ENCODE measurements at regions of chr6 and their contacts with region 1.

Region 1: DNA sequence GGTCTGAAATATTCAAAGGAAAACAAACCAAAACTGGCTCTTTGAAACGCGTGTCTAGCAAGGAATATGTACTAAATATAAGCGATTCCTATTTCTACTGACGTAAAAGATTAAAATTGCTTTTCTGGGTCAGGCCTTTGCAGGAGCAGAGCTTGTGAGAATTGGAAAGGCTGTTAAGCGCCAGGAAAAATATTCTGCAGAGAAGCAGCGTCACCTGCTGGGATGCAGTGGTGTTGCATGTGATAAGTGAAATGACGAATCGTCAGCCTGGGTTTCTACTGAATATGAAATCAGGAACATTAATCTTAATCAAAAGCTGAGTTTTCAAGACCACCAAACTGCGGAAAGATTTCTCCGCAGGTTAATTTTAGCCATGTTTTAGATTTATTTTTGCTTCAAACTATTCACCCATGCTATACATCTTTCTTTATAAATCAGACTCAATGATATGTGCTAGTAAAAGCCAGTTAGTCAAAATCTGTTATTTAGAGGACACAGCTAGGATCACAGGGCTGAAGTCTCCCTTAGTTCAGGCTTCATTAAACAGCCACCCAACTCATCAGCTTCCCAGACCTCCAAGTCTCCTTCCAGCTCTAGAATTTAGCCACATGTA is 67.4 kb downstream of the ALDH8A1 start:
- DNase-seq: peak; percentile 22 to 67
- ATAC-seq: peak; percentile 50 to 74; a peak in 4 of 6 replicates
- H3K4me3 ChIP-seq: no peak overlapping the region
- H3K27ac ChIP-seq: peak overlapping the region; percentile 55 to 67; a peak in 5 of 6 replicates
- H3K4me1 ChIP-seq: no peaks in the 10 kb centered on the region
- CTCF ChIP-seq: peak; percentile 86
- EP300 ChIP-seq: no peak
- POLR2A ChIP-seq: no peak
- RAD21 ChIP-seq: peak; percentile 93 to 96

Region 2: GRCh38 chr6:134123666-134124208 is 758.8 kb before region 1 on chr6:
- CTCF ChIA-PET with region 1: interaction called, 19 read pairs
- POLR2A ChIA-PET with region 1: no interaction called
- DNase-seq: peak; percentile 19 to 90
- ATAC-seq: peak; percentile 98 to 99
- H3K4me3 ChIP-seq: no peak overlapping the region
- H3K27ac ChIP-seq: peak overlapping the region; percentile 39 to 40; a peak in 3 of 6 replicates
- H3K4me1 ChIP-seq: no peaks in the 10 kb centered on the region
- CTCF ChIP-seq: peak; percentile 78
- EP300 ChIP-seq: no peak
- POLR2A ChIP-seq: no peak
- RAD21 ChIP-seq: peak; percentile 54 to 56

Region 3: GRCh38 chr6:134161036-134161435 is 721.5 kb before region 1 on chr6:
- CTCF ChIA-PET with region 1: interaction called, 31 read pairs
- POLR2A ChIA-PET with region 1: no interaction called
- DNase-seq: no peak
- ATAC-seq: no peak
- H3K4me3 ChIP-seq: no peak overlapping the region
- H3K27ac ChIP-seq: peak overlapping the region; percentile 21 to 37; a peak in 1 of 6 replicates
- H3K4me1 ChIP-seq: peaks cover 5% of the 10 kb centered on the region; the same call in 1 of the 3 replicates
- CTCF ChIP-seq: no peak
- EP300 ChIP-seq: no peak
- POLR2A ChIP-seq: no peak
- RAD21 ChIP-seq: no peak

Region 4: DNA sequence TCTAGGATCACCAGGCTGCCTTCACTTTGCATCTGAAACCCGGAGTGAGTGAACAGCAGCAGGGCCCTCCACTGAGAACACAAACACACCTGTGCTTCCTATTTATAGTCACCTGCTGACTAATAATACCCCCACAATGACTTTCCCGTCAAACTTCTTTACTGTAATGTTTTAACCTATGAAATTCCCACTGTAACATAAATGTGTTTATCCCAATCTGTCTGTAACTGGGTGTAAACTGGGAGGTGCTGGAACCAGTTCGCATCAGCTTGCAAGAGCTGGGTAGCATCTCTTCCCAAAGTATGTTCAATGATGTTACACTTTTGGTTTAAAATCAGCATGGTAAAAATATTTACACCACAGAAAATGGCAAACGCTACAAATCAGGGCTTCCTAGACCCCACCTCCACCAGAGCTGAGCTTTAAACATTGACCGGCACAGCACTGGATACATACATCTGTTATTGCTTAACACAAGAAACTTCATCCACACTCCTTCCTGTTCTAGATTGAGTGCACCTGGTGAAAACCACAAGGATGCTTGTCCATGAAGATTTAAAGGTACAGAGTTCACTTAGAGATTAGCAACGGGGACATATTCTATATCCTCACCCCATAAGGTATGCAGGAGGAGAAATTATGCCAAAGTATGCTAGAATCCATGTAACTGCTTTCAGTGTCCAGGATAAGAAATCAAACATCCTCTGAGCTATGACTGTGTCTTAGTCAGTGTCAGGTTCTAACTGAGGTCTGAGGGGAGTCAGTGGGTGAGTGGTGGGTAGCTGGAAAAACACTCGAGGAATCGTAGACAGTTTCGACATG is 11.6 kb before region 1 on chr6:
- CTCF ChIA-PET with region 1: interaction called, 13 read pairs
- POLR2A ChIA-PET with region 1: no interaction called
- DNase-seq: no peak
- ATAC-seq: no peak
- H3K4me3 ChIP-seq: no peak overlapping the region
- H3K27ac ChIP-seq: no peak overlapping the region
- H3K4me1 ChIP-seq: no peaks in the 10 kb centered on the region
- CTCF ChIP-seq: no peak
- EP300 ChIP-seq: no peak
- POLR2A ChIP-seq: no peak
- RAD21 ChIP-seq: no peak

Region 5: GRCh38 chr6:134902074-134902861 is 19.7 kb after region 1 on chr6:
- CTCF ChIA-PET with region 1: interaction called, 10 read pairs
- POLR2A ChIA-PET with region 1: no interaction called
- DNase-seq: no peak
- ATAC-seq: no peak; a peak in 1 of 6 replicates
- H3K4me3 ChIP-seq: no peak overlapping the region
- H3K27ac ChIP-seq: peak overlapping the region in 1 of 2 experiments; percentile 30; a peak in 2 of 6 replicates
- H3K4me1 ChIP-seq: no peaks in the 10 kb centered on the region
- CTCF ChIP-seq: no peak
- EP300 ChIP-seq: no peak
- POLR2A ChIP-seq: no peak
- RAD21 ChIP-seq: no peak

Region 6: GRCh38 chr6:135044639-135045038 is 162.1 kb after region 1 on chr6:
- CTCF ChIA-PET with region 1: no interaction called
- POLR2A ChIA-PET with region 1: no interaction called
- DNase-seq: no peak
- ATAC-seq: no peak
- H3K4me3 ChIP-seq: no peak overlapping the region
- H3K27ac ChIP-seq: no peak overlapping the region
- H3K4me1 ChIP-seq: 0 out of 3 replicates have a peak, but pooled peaks cover 5% of the 10 kb centered on the region
- CTCF ChIP-seq: no peak
- EP300 ChIP-seq: no peak
- POLR2A ChIP-seq: no peak
- RAD21 ChIP-seq: no peak